ENCODE measurements at regions of chr2 and their contacts with region 1.

Region 1: DNA sequence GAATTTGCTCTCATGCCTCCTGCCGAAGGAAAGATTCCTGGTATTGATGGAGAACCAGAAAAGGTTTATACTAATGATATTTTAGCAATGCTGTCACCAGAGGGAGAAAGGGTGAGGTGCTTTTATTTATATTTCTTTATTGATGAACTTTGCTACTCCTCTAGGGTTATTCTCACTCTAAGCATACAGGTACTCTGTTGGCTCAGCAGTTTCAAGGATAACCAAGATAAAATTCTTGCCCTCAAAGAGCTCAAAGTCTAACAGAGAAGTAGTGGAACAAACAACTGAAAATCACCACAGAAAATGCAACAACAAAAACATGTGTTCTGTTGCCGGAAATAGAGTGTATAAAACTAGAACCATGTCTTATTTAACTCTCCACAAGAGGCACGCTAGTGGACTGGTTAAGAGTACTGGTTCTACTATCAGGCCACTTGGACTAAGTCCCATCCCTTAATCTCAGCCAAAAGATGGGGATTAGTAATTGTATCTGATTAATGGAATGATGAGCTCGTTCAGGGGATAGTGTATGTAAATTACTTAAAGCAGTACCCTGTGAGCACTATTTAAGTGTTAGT is 103.6 kb downstream of the DNAH6 start:
- DNase-seq: no peak
- H3K4me3 ChIP-seq: no peak overlapping the region
- H3K27ac ChIP-seq: no peak overlapping the region
- H3K4me1 ChIP-seq: no peaks in the 10 kb centered on the region
- H3K27me3 ChIP-seq: no peaks in the 10 kb centered on the region
- CTCF ChIP-seq: no peak
- POLR2A ChIP-seq: no peak

Region 2: DNA sequence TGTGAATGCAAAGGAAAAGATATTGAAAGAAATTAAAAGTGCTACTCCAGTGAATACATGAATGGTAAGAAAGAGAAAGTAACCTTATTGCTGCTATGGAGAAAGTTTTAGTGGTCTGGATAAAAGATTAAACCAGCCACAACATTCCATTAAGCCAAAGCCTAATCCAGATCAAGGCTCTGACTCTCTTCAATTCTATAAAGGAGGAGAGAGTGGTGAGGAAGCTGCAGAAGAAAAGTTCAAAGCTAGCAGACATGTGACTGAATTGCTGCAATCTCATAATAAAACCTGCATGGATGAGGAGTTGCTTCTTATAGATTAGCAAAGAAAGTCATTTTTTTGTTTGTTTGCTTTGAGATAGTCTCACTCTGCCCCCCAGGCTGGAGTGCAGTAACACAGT is 26.6 kb after region 1 on chr2:
- intact Hi-C with region 1: loop called (anchors 2 kb)
- DNase-seq: no peak
- H3K4me3 ChIP-seq: no peak overlapping the region
- H3K27ac ChIP-seq: no peak overlapping the region
- H3K4me1 ChIP-seq: no peaks in the 10 kb centered on the region
- H3K27me3 ChIP-seq: no peaks in the 10 kb centered on the region
- CTCF ChIP-seq: no peak
- POLR2A ChIP-seq: no peak

Region 3: DNA sequence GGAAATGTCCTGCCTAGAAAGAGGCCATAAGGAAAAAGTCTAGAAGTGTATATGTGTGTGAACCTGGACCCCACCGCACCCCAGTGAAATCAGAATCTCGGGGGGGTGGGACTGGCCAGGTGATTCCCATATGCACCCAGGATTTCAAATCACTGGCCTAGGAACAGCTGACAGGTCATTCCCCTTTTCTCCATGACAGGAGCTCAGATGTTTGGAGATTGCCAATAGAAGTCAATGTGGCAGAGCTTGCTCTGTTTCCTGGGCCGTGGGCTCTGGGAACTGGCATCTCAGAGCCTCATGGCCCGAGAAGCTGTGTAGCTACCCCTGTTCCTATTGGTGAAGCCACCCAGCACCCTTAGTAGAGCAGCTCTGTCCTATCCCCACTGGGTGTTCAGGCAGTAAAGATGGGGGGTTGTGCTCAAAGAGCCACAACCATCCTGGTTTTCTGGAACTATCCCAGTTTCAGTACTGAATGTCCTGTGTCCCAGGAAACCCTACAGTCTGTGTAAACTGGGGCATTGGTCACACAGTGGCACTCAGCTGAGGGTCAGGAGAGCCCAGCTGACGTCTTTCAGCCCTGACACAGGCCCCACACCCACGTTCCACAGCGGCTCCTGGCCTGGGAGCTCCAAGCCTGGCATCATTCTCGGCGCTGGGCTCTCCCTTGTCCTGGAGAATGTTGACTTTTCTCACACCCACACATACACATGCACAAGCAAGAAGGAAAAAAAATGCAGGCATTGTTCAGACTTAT is 1093.1 kb after region 1 on chr2:
- intact Hi-C with region 1: no loop called
- DNase-seq: no peak
- H3K4me3 ChIP-seq: no peak overlapping the region
- H3K27ac ChIP-seq: peak overlapping the region; percentile 33 to 83
- H3K4me1 ChIP-seq: no peaks in the 10 kb centered on the region
- H3K27me3 ChIP-seq: no peaks in the 10 kb centered on the region
- CTCF ChIP-seq: no peak
- POLR2A ChIP-seq: no peak

Measured in breast epithelium (tissue), 4 donors.